ENCODE measurements at regions of chr16 and their contacts with region 1.

Region 1: GRCh38 chr16:10181196-10182162 is 749 bp downstream of the GRIN2A start:
- DNase-seq: peak; percentile 23
- H3K4me3 Mint-ChIP-seq: no peak overlapping the region
- H3K27ac Mint-ChIP-seq: no peak overlapping the region
- H3K4me1 Mint-ChIP-seq: no peaks in the 10 kb centered on the region
- H3K27me3 Mint-ChIP-seq: no peaks in the 10 kb centered on the region
- CTCF ChIP-seq: peak; percentile 44

Region 2: DNA sequence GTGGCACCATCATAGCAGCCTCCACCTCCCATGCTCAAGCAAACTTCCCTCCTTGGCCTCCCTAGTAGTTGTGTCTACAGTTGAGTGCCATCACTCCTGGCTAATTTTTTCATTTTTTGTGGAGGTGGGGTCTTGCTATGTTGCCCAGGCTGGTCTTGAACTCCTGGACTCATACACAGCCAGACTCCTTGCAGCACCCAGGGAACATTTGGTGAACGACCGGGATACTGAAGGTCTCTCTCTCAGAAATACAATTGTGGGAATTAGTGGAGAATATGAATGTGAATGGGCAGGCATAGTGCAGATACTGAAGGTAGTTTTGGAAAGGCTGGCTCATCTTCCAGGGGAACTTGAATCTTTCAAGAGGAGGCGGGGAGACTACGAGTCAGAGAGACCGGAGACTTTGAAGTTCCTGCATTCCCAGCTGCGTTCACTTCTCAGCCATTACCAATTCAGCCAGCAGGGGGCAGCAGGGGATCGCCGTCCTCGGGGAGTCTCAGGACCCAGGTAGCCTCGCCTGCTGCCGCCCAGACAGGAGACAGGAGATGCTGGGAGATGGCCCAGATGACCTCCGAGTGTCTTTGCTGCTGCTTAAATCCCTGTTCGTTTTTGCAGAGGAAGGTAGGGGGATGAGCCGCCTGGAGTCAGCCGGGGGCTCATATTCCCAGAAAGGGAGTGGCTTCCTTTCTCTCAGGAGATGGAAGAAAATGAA is 1021.5 kb before region 1 on chr16:
- CTCF ChIA-PET with region 1: interaction called, 3 read pairs
- POLR2A ChIA-PET with region 1: no interaction called
- intact Hi-C with region 1: loop called (anchors 1 kb)
- DNase-seq: peak; percentile 68
- H3K4me3 Mint-ChIP-seq: no peak overlapping the region
- H3K27ac Mint-ChIP-seq: no peak overlapping the region
- H3K4me1 Mint-ChIP-seq: no peaks in the 10 kb centered on the region
- H3K27me3 Mint-ChIP-seq: no peaks in the 10 kb centered on the region
- CTCF ChIP-seq: peak; percentile 65

Region 3: GRCh38 chr16:9258423-9259051 is 922.9 kb before region 1 on chr16:
- CTCF ChIA-PET with region 1: interaction called, 3 read pairs
- POLR2A ChIA-PET with region 1: no interaction called
- intact Hi-C with region 1: loop called (anchors 2 kb)
- DNase-seq: peak; percentile 49
- H3K4me3 Mint-ChIP-seq: no peak overlapping the region
- H3K27ac Mint-ChIP-seq: no peak overlapping the region
- H3K4me1 Mint-ChIP-seq: no peaks in the 10 kb centered on the region
- H3K27me3 Mint-ChIP-seq: no peaks in the 10 kb centered on the region
- CTCF ChIP-seq: peak; percentile 50

Region 4: GRCh38 chr16:9647981-9648712 is 533.3 kb before region 1 on chr16:
- CTCF ChIA-PET with region 1: interaction called, 4 read pairs
- POLR2A ChIA-PET with region 1: no interaction called
- intact Hi-C with region 1: loop called (anchors 5 kb)
- DNase-seq: peak; percentile 14
- H3K4me3 Mint-ChIP-seq: no peak overlapping the region
- H3K27ac Mint-ChIP-seq: no peak overlapping the region
- H3K4me1 Mint-ChIP-seq: no peaks in the 10 kb centered on the region
- H3K27me3 Mint-ChIP-seq: no peaks in the 10 kb centered on the region
- CTCF ChIP-seq: peak; percentile 27